WTC11 (cell line): ENCODE measurements at regions of chr4 and their contacts with region 1.

Region 1: DNA sequence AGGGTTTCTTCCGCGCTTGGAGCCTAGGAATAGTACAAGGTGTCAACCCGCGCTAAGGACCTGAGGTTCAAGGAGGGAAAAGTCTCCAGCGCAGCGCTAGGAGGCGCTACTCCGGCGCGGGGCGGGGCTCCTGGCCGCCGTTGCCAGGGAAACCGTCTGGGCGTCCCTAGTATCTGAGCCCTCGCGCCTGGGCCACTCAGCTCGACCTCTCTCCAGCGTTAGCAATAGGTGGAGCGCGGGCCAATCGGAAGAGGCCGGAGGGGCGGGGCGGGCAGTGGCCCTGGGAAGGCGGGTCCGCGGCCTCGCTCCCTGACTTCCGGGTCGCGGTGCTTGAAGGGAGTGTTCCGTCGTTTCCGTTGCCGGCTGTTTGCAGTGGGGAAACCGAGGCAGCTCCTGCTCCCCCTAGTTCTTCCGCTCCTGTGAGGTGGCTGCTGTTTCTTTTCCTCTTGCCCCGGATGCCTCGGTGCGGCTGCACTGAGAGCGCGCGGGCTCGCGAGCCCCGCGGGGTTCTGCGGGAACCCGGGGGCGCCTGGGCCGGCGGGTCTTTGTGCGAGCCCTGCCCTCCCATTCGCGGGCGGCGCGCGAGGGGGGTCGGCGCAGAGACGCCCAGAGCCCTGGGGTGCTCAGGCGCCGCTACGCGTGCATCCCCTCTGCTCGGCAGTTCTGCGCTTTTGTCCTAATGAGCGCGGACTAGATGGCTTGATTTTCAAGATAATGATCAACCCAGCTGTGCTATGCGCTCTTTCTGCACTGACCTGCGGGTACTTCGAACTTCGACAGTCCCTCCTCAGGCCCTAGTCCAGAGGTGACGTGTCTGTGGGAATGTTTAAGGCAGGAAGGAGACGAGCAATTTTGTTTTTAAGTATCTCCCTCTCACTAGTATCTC is at the start of gene ELMOD2:
- DNase-seq: peak; percentile 98
- ATAC-seq: peak; percentile 100
- H3K4me3 Mint-ChIP-seq: peak within 1 kb of the TSS; percentile 86
- H3K27ac Mint-ChIP-seq: peak within 1 kb of the TSS; percentile 74
- H3K4me1 Mint-ChIP-seq: peaks cover 9% of the 10 kb centered on the region
- H3K27me3 Mint-ChIP-seq: peaks cover 28% of the 10 kb centered on the region
- CTCF ChIP-seq: peak; percentile 81
- total RNA-seq, gene ELMOD2: 27.4 to 33.6 TPM (median 30.5 TPM) in 3 replicates

Region 2: DNA sequence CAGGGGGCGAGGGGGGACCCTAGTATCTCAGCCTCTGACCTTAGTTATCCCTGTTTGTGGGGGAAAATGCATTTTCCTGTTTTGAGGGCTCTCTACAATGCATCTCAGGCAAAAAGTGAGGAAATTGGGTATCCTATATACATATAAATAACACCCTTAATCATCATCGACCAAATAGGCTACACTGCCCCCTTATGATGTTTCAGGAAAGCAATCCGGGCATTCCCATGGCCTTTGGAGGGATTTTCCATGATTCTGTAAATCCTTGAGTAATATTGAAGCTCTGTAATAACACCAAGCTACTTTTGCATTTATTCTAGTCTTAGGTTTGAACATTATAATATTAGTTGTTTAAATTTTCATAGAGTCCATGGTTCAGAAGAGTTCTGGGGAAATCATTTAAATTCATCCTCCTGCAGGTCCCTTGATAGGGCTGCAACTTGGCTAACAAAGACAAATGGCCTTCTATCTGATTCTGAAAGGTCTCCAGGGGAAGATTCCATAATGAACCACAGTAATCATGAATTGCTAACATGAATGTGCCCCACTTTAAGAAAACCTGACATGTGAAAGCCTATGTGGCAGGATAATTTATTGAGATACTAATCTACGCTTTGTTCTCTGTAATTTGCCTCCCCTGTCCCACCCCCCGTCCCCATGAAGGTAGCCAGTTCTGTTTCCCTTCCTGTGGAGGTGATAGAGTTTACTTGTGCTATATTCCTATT is 242.1 kb before region 1 on chr4:
- CTCF ChIA-PET with region 1: no interaction called
- POLR2A ChIA-PET with region 1: no interaction called
- DNase-seq: no peak
- ATAC-seq: peak; percentile 60; the same call in 1 of the 2 replicates
- H3K4me3 Mint-ChIP-seq: no peak overlapping the region
- H3K27ac Mint-ChIP-seq: no peak overlapping the region
- H3K4me1 Mint-ChIP-seq: peaks cover 11% of the 10 kb centered on the region
- H3K27me3 Mint-ChIP-seq: no peaks in the 10 kb centered on the region
- CTCF ChIP-seq: no peak

Region 3: DNA sequence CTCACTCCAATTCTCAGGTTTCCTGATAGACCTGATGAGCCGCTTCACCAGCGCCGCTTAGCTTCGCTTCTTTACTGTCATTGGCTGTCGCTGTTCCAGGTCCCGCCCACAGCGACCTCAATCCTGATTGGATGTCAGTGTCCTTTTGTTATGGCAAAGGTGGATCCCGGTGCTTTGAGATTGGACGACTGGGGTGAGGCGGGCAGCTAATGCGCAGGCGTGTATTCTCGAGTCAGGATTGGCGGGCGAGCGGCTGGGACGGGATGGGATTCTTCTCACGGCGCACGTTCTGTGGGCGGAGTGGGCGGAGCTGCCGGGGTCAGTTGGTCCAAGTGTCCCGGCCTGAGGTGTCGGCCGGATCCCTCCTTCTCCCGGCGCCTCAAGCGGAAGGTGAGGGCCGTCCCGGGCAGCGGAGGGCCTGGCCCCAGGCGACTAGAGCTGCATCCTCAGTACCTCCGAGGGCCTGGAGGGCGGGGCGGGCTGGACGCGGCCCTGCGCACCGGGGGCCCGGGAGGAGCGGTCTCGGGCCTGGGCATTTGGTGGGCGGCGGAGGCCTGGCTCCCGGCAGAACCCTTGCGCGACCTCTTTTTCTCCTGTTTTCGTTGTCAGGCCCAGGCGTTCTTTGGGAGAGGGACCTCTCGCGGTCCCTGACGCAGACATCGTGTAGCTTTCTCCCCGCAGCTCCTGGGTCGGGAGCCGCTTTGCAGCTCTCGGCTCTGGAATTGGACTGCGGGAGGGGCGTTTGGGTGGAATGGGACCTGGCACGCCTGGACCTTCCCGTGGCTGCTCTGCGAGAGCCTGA is 150.6 kb before region 1 on chr4 and contains the start of gene SCOC:
- CTCF ChIA-PET with region 1: interaction called, 14 read pairs
- POLR2A ChIA-PET with region 1: interaction called, 4 read pairs
- DNase-seq: peak; percentile 99
- ATAC-seq: peak; percentile 95
- H3K4me3 Mint-ChIP-seq: no peak within 1 kb of the TSS
- H3K27ac Mint-ChIP-seq: peak within 1 kb of the TSS; percentile 91
- H3K4me1 Mint-ChIP-seq: peaks cover 22% of the 10 kb centered on the region
- H3K27me3 Mint-ChIP-seq: no peaks in the 10 kb centered on the region
- CTCF ChIP-seq: no peak
- total RNA-seq, gene SCOC: 33.0 to 37.3 TPM (median 33.6 TPM) in 3 replicates

Region 4: DNA sequence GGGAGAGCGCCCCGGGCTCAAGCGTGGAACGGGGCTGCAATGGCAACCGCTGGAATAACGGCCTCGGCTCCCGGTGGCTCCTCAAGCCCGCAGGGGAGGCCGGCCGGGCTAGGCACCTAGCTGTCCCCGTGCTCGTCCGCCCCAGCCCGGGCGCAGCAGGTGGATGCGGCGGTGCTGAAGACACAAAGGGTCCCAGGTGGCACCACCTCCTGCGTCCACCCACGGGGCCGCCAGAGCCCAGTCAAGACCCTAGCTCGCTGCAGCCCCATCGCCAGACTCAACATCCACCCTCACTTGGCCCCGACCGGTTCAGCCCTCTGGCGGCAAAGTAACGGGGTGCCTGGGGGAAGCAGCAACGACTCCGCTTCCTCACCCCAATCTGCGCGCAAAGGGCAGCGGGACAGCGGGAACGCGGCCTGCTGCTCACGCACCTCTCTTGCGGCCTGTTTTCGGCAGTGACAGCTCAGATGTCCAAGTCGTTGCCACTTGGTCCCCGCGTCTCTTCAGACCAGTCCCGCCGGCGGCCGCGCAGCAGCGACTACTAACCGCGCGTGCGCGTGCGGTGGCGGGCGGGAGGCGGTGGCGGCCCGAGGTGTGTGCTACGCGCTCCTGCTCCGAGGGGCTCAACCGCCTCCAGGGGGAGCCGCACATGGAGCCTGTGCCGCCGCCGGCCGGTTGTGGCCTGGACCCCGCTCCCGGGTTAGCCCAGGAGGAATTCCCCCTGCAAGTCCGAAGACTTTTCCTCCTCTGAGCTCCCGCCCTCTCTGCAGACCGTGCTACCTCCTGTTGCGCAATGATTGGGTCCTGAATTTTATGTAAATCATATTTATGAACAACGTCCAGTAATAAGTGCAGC is 96.8 kb before region 1 on chr4 and contains the start of gene CLGN:
- CTCF ChIA-PET with region 1: interaction called, 11 read pairs
- POLR2A ChIA-PET with region 1: no interaction called
- DNase-seq: peak; percentile 91
- ATAC-seq: peak; percentile 95
- H3K4me3 Mint-ChIP-seq: peak within 1 kb of the TSS; percentile 82
- H3K27ac Mint-ChIP-seq: no peak within 1 kb of the TSS
- H3K4me1 Mint-ChIP-seq: peaks cover 11% of the 10 kb centered on the region
- H3K27me3 Mint-ChIP-seq: peaks cover 25% of the 10 kb centered on the region
- CTCF ChIP-seq: 0 out of 2 replicates have a peak, but pooled peaks have one; percentile 26
- total RNA-seq, gene CLGN: 2.3 to 3.4 TPM (median 3.0 TPM) in 3 replicates

Region 5: DNA sequence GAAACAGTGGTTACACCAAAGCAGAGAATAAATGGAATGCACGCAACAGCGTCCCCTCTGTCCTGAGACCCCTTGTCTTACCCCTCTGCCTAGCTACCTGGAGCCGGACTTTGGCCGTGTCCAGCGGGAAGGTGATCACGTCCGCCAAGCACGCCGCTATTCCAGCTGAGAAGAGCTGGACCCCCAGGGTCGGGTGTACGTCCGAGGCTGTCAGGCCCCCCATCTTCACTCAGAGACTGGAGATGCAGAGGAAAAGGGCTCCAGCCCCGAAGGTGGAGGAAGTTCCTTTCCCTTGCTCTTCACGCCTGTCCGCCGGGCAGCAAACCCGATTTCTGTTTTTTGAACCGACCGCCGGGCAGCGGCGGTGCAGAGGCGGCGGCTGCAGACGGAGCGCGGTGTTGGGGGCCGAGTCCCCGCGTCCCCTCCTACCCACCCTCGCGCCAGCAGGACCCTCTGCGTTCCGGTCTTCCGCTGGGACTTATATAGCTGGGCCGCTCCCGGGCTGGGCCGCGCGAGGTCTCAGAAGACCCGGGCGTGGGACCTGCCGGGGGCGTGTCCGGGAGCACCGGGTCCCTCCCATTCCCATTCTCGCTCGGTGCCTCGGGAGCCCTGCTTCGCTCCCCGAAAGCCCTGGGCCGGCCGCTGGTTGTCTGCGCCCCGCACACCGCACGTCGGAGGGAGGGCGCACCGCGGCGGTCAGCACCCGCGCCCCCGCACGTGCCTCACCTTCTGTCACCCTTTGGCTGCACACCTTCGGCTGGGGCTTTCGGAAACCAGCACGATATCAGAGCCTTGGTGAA is 44.6 kb after region 1 on chr4 and contains the start of gene UCP1:
- CTCF ChIA-PET with region 1: interaction called, 12 read pairs
- POLR2A ChIA-PET with region 1: interaction called, 4 read pairs
- DNase-seq: peak; percentile 73
- ATAC-seq: peak; percentile 86
- H3K4me3 Mint-ChIP-seq: peak within 1 kb of the TSS; percentile 73
- H3K27ac Mint-ChIP-seq: no peak within 1 kb of the TSS
- H3K4me1 Mint-ChIP-seq: peaks cover 16% of the 10 kb centered on the region
- H3K27me3 Mint-ChIP-seq: no peaks in the 10 kb centered on the region
- CTCF ChIP-seq: no peak
- total RNA-seq, gene UCP1: 0.15 to 0.73 TPM (median 0.48 TPM) in 3 replicates